ENCODE measurements at regions of chr5 and their contacts with region 1.

Region 1: GRCh38 chr5:82165740-82166530 is 112.2 kb downstream of the RPS23 start:
- DNase-seq: peak; percentile 61
- H3K4me3 Mint-ChIP-seq: no peak overlapping the region
- H3K27ac Mint-ChIP-seq: peak overlapping the region; percentile 70
- H3K4me1 Mint-ChIP-seq: peaks cover 49% of the 10 kb centered on the region
- H3K27me3 Mint-ChIP-seq: no peaks in the 10 kb centered on the region
- CTCF ChIP-seq: peak; percentile 68

Region 2: DNA sequence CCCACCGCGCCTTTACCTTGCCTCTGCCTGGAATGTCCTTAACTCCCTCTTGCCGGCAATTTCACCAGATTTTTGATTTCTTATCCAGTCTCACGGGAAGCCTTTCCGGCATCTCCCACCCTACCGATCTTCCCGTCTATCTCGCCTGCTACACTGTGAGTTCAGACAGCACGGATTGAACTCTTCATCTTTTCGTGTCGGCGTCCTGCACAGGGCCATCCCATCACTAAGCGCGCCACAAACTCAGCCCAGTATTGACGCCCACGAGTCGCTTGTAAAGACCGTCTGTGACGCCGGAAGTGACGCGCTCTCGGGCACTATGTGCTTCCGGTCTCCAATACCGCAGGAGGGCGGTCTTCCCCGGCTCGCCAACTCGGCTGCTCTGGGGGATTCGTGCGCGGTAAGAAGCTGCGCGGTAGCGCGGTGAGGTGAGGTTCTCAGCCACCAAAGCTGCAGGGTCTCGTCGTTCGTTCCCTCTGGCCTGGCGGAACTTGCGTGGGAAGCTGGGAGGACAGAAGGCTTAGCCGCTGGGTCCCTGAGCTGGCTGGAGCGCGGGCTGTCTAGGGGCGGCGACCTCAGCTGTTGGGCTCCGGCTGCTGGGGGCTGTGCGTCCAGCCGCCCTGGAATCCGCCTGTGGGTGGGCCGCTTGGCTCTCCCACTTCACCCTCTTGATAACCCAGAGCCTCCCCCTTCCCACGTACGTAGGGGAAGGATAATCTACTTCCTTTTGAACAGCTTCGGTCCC is 864.5 kb before region 1 on chr5 and contains the start of gene ZCCHC9:
- CTCF ChIA-PET with region 1: interaction called, 9 read pairs
- intact Hi-C with region 1: loop called (anchors 1 kb)
- DNase-seq: peak; percentile 92
- H3K4me3 Mint-ChIP-seq: peak within 1 kb of the TSS; percentile 87
- H3K27ac Mint-ChIP-seq: peak within 1 kb of the TSS; percentile 90
- H3K4me1 Mint-ChIP-seq: peaks cover 56% of the 10 kb centered on the region
- H3K27me3 Mint-ChIP-seq: no peaks in the 10 kb centered on the region
- CTCF ChIP-seq: no peak
- total RNA-seq, gene ZCCHC9: 34.9 and 36.1 TPM in 2 replicates

Region 3: DNA sequence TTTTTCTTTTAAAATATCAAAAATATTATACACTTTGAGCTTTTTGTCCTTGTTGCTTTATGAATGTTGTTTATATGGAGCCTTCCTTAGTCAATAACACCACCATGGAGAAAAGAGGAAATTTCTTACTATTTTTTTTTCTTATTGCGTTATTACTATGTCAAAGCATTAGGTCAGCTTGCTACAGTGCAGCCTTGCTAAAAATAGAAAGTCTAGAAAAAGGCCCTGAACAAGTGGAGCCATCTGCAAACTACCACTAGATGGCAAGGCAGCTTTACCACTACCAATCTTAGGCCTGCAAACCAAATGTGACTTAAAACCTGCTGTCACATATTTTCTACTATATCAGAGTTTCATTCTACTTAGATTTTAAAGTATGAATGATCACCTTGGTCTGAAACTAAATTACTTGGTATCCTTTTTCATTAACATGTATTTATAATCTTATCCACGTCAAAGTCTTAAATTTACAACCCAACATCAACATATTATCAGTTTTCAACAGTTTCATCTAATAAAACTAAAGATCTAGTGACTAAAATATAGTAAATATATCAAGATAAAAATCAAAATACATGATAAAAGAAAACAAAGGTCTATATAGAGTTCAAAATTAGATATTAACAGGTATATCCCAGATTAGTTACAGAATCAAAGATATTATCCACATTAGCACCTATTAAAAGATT is 658.9 kb before region 1 on chr5:
- CTCF ChIA-PET with region 1: interaction called, 19 read pairs
- intact Hi-C with region 1: loop called (anchors 1 kb)
- DNase-seq: peak; percentile 61
- H3K4me3 Mint-ChIP-seq: no peak overlapping the region
- H3K27ac Mint-ChIP-seq: no peak overlapping the region
- H3K4me1 Mint-ChIP-seq: no peaks in the 10 kb centered on the region
- H3K27me3 Mint-ChIP-seq: no peaks in the 10 kb centered on the region
- CTCF ChIP-seq: peak; percentile 78

Region 4: GRCh38 chr5:81851481-81852178 is 314.3 kb before region 1 on chr5:
- CTCF ChIA-PET with region 1: interaction called, 13 read pairs
- intact Hi-C with region 1: loop called (anchors 2 kb)
- DNase-seq: peak; percentile 95
- H3K4me3 Mint-ChIP-seq: peak overlapping the region; percentile 72
- H3K27ac Mint-ChIP-seq: peak overlapping the region; percentile 53
- H3K4me1 Mint-ChIP-seq: peaks cover 47% of the 10 kb centered on the region
- H3K27me3 Mint-ChIP-seq: no peaks in the 10 kb centered on the region
- CTCF ChIP-seq: no peak

Region 5: DNA sequence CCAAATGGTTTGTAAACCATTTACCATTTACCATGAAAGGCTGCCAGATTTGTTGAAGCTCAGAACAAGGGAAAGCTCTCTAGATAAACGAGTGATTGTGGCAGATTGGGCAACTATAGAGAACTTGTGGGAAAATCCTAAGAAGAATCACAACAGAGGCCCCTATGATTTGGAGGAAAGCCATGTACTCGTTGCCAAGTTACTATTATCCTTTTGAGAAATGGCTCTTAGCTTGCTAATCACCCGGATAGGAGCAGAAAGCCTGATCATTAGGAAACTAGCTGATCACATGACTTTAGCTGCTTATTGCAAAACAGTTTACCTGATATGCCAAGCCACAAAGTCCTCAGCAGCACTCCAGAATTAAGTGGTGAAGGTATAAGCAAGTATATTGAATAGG is 217.6 kb before region 1 on chr5:
- CTCF ChIA-PET with region 1: no interaction called
- intact Hi-C with region 1: no loop called
- DNase-seq: no peak
- H3K4me3 Mint-ChIP-seq: no peak overlapping the region
- H3K27ac Mint-ChIP-seq: no peak overlapping the region
- H3K4me1 Mint-ChIP-seq: no peaks in the 10 kb centered on the region
- H3K27me3 Mint-ChIP-seq: no peaks in the 10 kb centered on the region
- CTCF ChIP-seq: no peak

Region 6: GRCh38 chr5:81971712-81972495 is 194.0 kb before region 1 on chr5 and contains the start of gene ATG10:
- CTCF ChIA-PET with region 1: no interaction called
- intact Hi-C with region 1: loop called (anchors 5 kb)
- DNase-seq: peak; percentile 95
- H3K4me3 Mint-ChIP-seq: peak within 1 kb of the TSS; percentile 77
- H3K27ac Mint-ChIP-seq: peak within 1 kb of the TSS; percentile 87
- H3K4me1 Mint-ChIP-seq: no peaks in the 10 kb centered on the region
- H3K27me3 Mint-ChIP-seq: no peaks in the 10 kb centered on the region
- CTCF ChIP-seq: no peak
- total RNA-seq, gene ATG10: 8.9 and 10.0 TPM in 2 replicates

Region 7: DNA sequence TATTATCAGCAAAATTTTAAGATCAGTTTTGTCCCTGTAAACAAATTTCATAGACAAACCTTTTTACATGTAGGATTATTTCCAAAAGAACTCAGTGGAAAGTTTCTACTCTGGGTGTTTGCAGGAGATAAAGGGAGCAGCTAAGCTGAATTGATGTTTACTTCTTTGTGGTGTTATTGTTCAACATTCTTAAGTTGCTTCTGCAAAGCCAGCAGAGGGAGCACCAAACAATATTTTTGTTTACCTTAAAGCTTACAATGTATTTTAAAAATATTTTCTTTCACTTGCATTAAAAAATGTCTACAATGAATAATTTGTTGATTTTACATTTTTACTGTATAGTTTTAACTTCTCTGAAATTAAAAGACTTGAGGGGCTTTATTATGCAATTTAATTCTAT is 58.7 kb before region 1 on chr5:
- CTCF ChIA-PET with region 1: interaction called, 43 read pairs
- intact Hi-C with region 1: loop called (anchors 1 kb)
- DNase-seq: peak; percentile 11
- H3K4me3 Mint-ChIP-seq: no peak overlapping the region
- H3K27ac Mint-ChIP-seq: no peak overlapping the region
- H3K4me1 Mint-ChIP-seq: no peaks in the 10 kb centered on the region
- H3K27me3 Mint-ChIP-seq: no peaks in the 10 kb centered on the region
- CTCF ChIP-seq: peak; percentile 54

Region 8: DNA sequence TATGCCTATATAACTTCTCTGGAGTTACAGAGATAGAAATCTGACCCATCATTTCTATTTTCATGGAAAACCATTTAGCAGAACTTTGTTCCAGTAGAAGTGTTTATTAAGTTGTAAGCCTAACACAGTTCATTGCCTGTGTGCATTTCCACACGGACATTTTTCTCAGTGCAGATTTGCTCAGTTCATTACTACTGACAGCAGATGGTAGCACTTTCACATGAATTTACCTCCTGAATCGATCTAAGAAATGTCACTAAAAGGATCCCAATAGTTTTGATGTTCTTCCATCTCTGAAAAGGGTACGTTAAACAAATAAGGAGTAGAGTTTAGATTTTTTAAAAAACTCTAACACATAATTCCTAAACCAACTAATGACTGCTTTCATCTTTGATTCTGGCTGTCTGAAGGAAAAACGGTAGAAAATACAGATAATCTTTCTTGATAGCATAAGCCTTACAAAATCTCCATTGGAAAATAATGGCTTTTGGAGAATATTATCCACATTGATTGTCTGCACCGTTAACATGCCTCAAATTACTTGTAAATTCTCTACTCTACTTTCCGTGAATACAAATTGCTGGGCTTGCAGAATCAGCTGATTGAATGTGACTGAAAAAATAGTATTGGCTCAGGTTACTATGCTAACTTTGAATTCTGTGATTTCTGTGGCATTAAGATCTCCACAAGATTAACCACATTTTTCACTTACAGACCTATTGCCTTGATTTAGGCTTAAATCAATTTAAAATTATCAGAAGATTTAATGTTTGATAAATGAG is 79.1 kb after region 1 on chr5:
- CTCF ChIA-PET with region 1: no interaction called
- intact Hi-C with region 1: no loop called
- DNase-seq: no peak
- H3K4me3 Mint-ChIP-seq: no peak overlapping the region
- H3K27ac Mint-ChIP-seq: no peak overlapping the region
- H3K4me1 Mint-ChIP-seq: no peaks in the 10 kb centered on the region
- H3K27me3 Mint-ChIP-seq: no peaks in the 10 kb centered on the region
- CTCF ChIP-seq: no peak